MCF 10A (cell line): ENCODE measurements at regions of chr17 and their contacts with region 1.

Region 1: GRCh38 chr17:28812091-28812747 is 30.4 kb downstream of the FAM222B start:
- DNase-seq: peak; percentile 97
- H3K4me3 Mint-ChIP-seq: peak overlapping the region; percentile 90
- H3K27ac Mint-ChIP-seq: peak overlapping the region; percentile 98
- H3K4me1 Mint-ChIP-seq: peaks cover 28% of the 10 kb centered on the region
- H3K27me3 Mint-ChIP-seq: no peaks in the 10 kb centered on the region
- CTCF ChIP-seq: no peak

Region 2: GRCh38 chr17:28717578-28718333 is 94.5 kb before region 1 on chr17 and contains the start of gene RAB34:
- CTCF ChIA-PET with region 1: interaction called, 4 read pairs
- POLR2A ChIA-PET with region 1: interaction called, 21 read pairs
- intact Hi-C with region 1: no loop called
- DNase-seq: peak; percentile 90
- H3K4me3 Mint-ChIP-seq: peak within 1 kb of the TSS; percentile 91
- H3K27ac Mint-ChIP-seq: peak within 1 kb of the TSS; percentile 97
- H3K4me1 Mint-ChIP-seq: peaks cover 31% of the 10 kb centered on the region
- H3K27me3 Mint-ChIP-seq: no peaks in the 10 kb centered on the region
- CTCF ChIP-seq: peak; percentile 26
- total RNA-seq, gene RAB34: 90.0 and 105 TPM in 2 replicates

Region 3: DNA sequence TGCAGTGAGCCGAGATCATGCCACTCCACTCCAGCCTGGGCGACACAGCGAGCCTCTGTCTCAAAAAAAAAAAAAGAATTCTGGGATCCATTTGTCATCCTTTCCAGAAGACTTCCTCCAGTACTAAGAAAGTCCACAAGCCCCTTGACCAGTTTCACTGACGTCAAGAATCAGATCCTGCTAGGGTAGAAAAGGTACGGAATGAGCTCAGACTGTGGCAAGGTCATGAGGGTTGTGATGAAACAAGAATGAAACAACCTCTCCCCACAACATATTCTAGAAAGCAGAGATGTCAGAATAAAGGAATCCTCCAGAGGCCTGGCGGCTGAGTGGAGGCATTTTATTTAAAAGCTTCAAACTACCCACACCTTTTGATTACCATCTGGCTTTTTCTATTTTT is 38.5 kb before region 1 on chr17:
- CTCF ChIA-PET with region 1: no interaction called
- POLR2A ChIA-PET with region 1: interaction called, 33 read pairs
- intact Hi-C with region 1: no loop called
- DNase-seq: no peak
- H3K4me3 Mint-ChIP-seq: no peak overlapping the region
- H3K27ac Mint-ChIP-seq: no peak overlapping the region
- H3K4me1 Mint-ChIP-seq: peaks cover 27% of the 10 kb centered on the region
- H3K27me3 Mint-ChIP-seq: no peaks in the 10 kb centered on the region
- CTCF ChIP-seq: no peak

Region 4: DNA sequence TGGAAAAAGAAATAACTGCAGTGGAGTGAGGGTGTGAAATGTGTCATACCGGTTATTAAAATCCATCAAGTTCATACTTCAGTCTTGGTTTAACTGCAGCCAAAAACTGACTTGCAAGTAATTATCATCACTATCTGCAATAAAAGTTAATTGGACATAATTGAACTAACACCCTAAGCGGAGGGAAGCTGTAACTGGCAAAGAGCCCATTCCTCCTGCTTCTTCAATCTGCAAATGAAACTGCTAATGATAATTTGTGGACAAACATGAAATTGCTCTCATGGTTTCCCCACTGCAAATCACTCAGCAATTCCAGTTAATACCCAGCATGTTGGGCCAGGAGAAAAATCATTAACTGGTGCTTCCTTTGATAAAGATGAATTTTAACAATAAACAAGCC is 16.2 kb before region 1 on chr17:
- CTCF ChIA-PET with region 1: interaction called, 4 read pairs
- POLR2A ChIA-PET with region 1: interaction called, 16 read pairs
- intact Hi-C with region 1: no loop called
- DNase-seq: no peak
- H3K4me3 Mint-ChIP-seq: no peak overlapping the region
- H3K27ac Mint-ChIP-seq: no peak overlapping the region
- H3K4me1 Mint-ChIP-seq: peaks cover 6% of the 10 kb centered on the region
- H3K27me3 Mint-ChIP-seq: no peaks in the 10 kb centered on the region
- CTCF ChIP-seq: no peak

Region 5: GRCh38 chr17:28896884-28897768 is 84.9 kb after region 1 on chr17 and contains the start of gene FLOT2:
- CTCF ChIA-PET with region 1: interaction called, 4 read pairs
- POLR2A ChIA-PET with region 1: interaction called, 38 read pairs
- intact Hi-C with region 1: loop called (anchors 2 kb)
- DNase-seq: peak; percentile 96
- H3K4me3 Mint-ChIP-seq: peak within 1 kb of the TSS; percentile 90
- H3K27ac Mint-ChIP-seq: peak within 1 kb of the TSS; percentile 93
- H3K4me1 Mint-ChIP-seq: peaks cover 26% of the 10 kb centered on the region
- H3K27me3 Mint-ChIP-seq: no peaks in the 10 kb centered on the region
- CTCF ChIP-seq: peak; percentile 5
- total RNA-seq, gene FLOT2: 98.5 and 126 TPM in 2 replicates

Region 6: DNA sequence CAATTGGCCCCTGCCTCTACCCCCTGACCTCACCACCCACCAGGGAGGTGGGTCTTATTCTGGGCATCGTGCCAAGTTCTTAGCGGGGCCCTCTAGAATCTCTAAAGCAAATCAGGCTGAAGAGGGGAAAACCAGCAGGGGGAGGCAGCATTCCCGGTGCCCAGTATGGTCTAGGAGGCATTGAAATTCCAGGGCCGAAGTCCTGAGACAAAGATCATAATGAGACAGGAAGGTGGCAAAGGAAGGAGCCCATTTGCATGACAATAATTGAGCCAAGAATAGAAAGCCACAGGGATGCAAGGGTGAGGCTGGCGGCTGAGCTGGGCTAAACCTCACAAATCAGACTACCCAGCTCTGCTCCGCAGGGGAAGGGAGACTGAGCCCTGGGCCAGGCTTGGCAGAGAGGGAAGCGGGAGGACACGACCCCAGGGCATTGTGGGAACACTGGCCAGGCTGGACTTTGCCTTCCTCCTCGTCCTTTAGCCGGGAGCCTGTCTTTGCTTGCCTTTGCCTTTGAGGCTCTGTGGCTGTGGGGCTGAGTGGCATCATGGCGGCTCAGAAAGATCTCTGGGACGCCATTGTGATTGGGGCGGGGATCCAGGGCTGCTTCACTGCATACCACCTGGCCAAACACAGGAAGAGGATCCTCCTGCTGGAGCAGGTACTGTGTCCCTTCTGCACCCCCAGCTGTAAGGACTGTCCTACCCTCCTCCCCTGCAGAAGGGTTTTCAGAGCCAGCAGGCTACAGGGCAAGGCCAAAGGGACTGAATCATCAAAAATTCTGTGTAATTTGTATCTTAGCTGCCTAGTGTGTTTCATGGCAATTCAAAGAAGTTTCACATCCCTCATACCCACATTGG is 230.7 kb after region 1 on chr17 and contains the start of gene PIPOX:
- CTCF ChIA-PET with region 1: no interaction called
- POLR2A ChIA-PET with region 1: no interaction called
- intact Hi-C with region 1: no loop called
- DNase-seq: peak; percentile 53
- H3K4me3 Mint-ChIP-seq: no peak within 1 kb of the TSS
- H3K27ac Mint-ChIP-seq: no peak within 1 kb of the TSS
- H3K4me1 Mint-ChIP-seq: peaks cover 6% of the 10 kb centered on the region
- H3K27me3 Mint-ChIP-seq: peaks cover 16% of the 10 kb centered on the region
- CTCF ChIP-seq: no peak
- total RNA-seq, gene PIPOX: not detected in 2 replicates